Heart left ventricle (tissue), 16 donors: ENCODE measurements at regions of chr10 and their contacts with region 1.

Region 1: GRCh38 chr10:103736763-103737162 is 118.6 kb downstream of the SH3PXD2A start:
- DNase-seq: no peak
- ATAC-seq: peak in 2 of 4 donors; percentile 33 to 38
- H3K4me3 ChIP-seq: no peak overlapping the region
- H3K27ac ChIP-seq: no peak overlapping the region
- H3K4me1 ChIP-seq: peaks cover 0 to 48% (median 38%) of the 10 kb centered on the region in 12 donors
- H3K27me3 ChIP-seq: no peaks in the 10 kb centered on the region
- CTCF ChIP-seq: no peak
- POLR2A ChIP-seq: no peak

Region 2: DNA sequence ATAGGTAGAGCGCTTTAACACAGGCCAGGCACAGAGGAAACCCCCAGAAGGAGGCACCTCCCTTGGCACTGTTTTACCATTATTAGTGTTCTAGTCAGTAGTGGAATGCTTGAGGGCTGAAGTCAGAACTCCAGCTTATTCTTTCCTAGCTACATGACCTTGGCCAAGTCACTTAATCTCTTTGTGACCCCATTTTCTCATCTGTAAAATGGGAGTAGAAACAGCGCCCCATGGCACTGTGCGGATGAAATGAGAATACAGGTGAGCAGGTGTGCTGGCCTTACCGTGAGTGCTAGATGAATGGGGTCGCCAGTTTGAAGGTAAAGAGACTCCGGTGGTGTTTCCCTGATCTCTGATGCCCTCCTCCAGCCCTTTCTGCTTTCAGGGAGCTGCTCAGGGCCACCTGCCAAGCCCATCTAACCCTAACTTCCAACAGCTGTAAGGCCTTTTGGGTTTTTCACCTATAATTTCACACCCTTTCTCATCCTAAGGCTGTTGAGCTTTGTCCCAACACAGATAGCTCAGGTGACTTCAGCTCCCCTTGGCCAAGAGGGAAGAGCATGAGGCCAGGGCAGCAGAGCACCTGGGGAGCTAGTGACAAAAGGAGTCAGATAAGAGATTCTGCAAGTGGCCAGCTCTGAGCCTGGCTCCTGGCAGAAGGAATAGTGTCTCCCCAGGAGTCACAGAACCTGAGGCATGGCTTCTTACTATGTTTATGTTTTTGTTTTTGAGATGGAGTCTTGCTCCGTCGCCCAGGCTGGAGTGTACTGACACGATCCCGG is 41.8 kb after region 1 on chr10:
- intact Hi-C with region 1: loop called in 1 of 10 experiments (anchors 2 kb)
- DNase-seq: no peak
- ATAC-seq: no peak
- H3K4me3 ChIP-seq: no peak overlapping the region
- H3K27ac ChIP-seq: no peak overlapping the region
- H3K4me1 ChIP-seq: peaks cover 8 to 54% (median 26%) of the 10 kb centered on the region in 12 donors
- H3K27me3 ChIP-seq: no peaks in the 10 kb centered on the region
- CTCF ChIP-seq: no peak
- POLR2A ChIP-seq: no peak

Region 3: GRCh38 chr10:104104926-104105325 is 368.2 kb after region 1 on chr10:
- intact Hi-C with region 1: no loop called
- DNase-seq: no peak
- ATAC-seq: no peak
- H3K4me3 ChIP-seq: no peak overlapping the region
- H3K27ac ChIP-seq: no peak overlapping the region
- H3K4me1 ChIP-seq: no peaks in the 10 kb centered on the region
- H3K27me3 ChIP-seq: no peaks in the 10 kb centered on the region
- CTCF ChIP-seq: no peak
- POLR2A ChIP-seq: no peak